GM18951 (cell line): ENCODE measurements at regions of chr12 and their contacts with region 1.

Region 1: DNA sequence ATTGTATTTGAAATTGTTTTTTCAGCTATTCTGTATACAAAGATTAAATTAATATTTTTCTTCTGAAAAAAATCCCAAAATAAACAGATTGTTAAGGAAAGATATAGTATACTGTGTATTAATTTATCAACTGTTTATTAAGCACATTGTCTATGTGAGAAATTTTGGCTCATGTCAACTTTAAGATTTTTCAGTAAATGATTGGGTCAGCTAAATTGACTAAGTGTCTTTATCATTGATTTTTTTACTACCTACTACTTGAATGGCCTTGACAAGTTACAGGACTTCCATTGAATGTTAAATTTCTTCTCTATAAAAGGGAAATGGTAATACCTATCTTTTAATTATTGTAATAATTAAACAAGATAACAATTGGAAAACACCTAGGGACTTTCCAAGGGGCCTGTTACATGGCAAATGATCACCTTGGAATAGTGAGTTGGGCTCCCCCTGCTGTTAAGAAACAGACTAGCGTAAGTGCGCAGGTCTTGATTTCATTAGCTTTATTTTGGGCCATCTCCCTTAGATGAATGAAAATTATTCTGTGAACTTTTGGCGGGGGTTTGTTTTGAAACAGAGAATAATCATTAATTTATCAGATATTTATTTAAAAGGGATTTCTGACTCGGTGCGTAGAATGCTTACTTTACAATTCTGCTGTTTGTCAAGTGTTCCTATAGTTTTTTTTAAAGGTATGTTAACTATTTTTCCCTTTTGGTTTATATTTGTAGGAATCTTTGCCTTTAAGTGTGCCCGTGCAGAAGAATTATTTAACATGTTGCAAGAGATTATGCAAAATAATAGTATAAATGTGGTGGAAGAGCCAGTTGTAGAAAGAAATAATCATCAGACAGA is 14.5 kb upstream of the CCT2 start:
- POLR2A ChIP-seq: no peak

Region 2: GRCh38 chr12:69388371-69388770 is 182.4 kb before region 1 on chr12:
- in situ Hi-C with region 1: loop called (anchors 25 kb)
- POLR2A ChIP-seq: no peak

Region 3: GRCh38 chr12:69708649-69709048 is 137.9 kb after region 1 on chr12:
- in situ Hi-C with region 1: no loop called
- POLR2A ChIP-seq: no peak